Activated naive CD4-positive, alpha-beta T cell treated with anti-CD3 and anti-CD28 coated beads for 36 hours (primary cell): ENCODE measurements at regions of chr2 and their contacts with region 1.

Region 1: GRCh38 chr2:6835467-6835866 is 30.2 kb downstream of the CMPK2 start:
- DNase-seq: no peak
- H3K4me3 Mint-ChIP-seq: no peak overlapping the region
- H3K27ac Mint-ChIP-seq: peak overlapping the region; percentile 1
- H3K4me1 Mint-ChIP-seq: peaks cover 19% of the 10 kb centered on the region
- H3K27me3 Mint-ChIP-seq: no peaks in the 10 kb centered on the region

Region 2: GRCh38 chr2:6605836-6606505 is 229.5 kb before region 1 on chr2:
- CTCF ChIA-PET with region 1: no interaction called
- intact Hi-C with region 1: no loop called
- DNase-seq: no peak
- H3K4me3 Mint-ChIP-seq: no peak overlapping the region
- H3K27ac Mint-ChIP-seq: no peak overlapping the region
- H3K4me1 Mint-ChIP-seq: no peaks in the 10 kb centered on the region
- H3K27me3 Mint-ChIP-seq: no peaks in the 10 kb centered on the region

Region 3: DNA sequence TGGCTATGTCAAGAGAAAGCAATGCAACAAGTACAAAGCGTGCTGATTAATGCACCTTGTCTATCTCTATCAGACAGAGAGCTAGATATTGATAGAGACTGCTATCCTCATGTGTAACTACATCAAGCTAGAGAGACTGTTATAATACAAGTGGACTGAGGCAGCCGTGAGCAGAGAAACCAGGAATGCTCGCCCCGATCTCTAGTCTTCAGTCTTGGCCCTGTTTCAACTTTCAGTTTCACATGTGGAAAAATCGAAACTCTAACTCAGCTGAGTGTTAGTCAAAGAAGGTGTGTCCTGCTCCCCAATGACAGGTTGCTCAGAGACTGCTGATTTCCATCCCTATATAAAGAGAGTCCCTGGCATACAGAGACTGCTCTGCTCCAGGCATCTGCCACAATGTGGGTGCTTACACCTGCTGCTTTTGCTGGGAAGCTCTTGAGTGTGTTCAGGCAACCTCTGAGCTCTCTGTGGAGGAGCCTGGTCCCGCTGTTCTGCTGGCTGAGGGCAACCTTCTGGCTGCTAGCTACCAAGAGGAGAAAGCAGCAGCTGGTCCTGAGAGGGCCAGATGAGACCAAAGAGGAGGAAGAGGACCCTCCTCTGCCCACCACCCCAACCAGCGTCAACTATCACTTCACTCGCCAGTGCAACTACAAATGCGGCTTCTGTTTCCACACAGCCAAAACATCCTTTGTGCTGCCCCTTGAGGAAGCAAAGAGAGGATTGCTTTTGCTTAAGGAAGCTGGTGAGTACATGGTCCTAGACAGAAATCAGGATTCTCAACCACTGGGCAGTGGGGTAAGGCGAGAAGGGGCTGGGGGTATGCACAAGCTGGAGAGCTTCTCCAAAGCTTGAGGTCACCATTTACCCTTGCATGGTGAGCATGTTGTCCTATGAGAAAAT is 42.2 kb after region 1 on chr2 and contains the start of gene RSAD2:
- CTCF ChIA-PET with region 1: interaction called, 3 read pairs
- intact Hi-C with region 1: loop called (anchors 1 kb)
- DNase-seq: peak; percentile 45
- H3K4me3 Mint-ChIP-seq: peak within 1 kb of the TSS; percentile 68
- H3K27ac Mint-ChIP-seq: no peak within 1 kb of the TSS
- H3K4me1 Mint-ChIP-seq: peaks cover 66% of the 10 kb centered on the region
- H3K27me3 Mint-ChIP-seq: no peaks in the 10 kb centered on the region
- total RNA-seq, gene RSAD2: 9.1 to 9.9 TPM

Region 4: GRCh38 chr2:6999211-6999877 is 163.9 kb after region 1 on chr2:
- CTCF ChIA-PET with region 1: no interaction called
- intact Hi-C with region 1: no loop called
- DNase-seq: no peak
- H3K4me3 Mint-ChIP-seq: no peak overlapping the region
- H3K27ac Mint-ChIP-seq: no peak overlapping the region
- H3K4me1 Mint-ChIP-seq: peaks cover 11% of the 10 kb centered on the region
- H3K27me3 Mint-ChIP-seq: no peaks in the 10 kb centered on the region

Region 5: GRCh38 chr2:7191932-7192331 is 356.5 kb after region 1 on chr2:
- CTCF ChIA-PET with region 1: no interaction called
- intact Hi-C with region 1: loop called (anchors 1 kb)
- DNase-seq: no peak
- H3K4me3 Mint-ChIP-seq: no peak overlapping the region
- H3K27ac Mint-ChIP-seq: no peak overlapping the region
- H3K4me1 Mint-ChIP-seq: peaks cover 15% of the 10 kb centered on the region
- H3K27me3 Mint-ChIP-seq: no peaks in the 10 kb centered on the region

Region 6: DNA sequence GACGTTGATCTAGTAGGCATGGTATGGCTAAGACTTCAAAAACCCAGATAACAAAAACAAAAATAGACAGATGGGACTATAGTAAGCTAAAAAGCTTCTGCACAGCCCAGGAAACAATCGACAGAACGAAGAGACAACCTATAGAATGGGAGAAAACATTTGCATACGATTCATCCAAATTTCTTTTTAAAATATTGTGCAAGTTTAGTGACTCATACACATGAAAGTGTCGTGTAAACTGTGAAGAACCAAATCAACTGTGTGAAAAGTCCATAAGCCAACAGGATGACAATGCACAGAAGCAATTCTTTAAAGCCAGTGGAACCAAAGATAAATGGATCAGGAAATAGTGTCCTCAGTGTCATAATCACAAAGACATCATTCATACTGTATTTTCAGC is 752.8 kb after region 1 on chr2:
- CTCF ChIA-PET with region 1: no interaction called
- intact Hi-C with region 1: loop called (anchors 1 kb)
- DNase-seq: no peak
- H3K4me3 Mint-ChIP-seq: no peak overlapping the region
- H3K27ac Mint-ChIP-seq: peak overlapping the region; percentile 6
- H3K4me1 Mint-ChIP-seq: peaks cover 27% of the 10 kb centered on the region
- H3K27me3 Mint-ChIP-seq: no peaks in the 10 kb centered on the region